ENCODE measurements at regions of chr3 and their contacts with region 1.

Region 1: GRCh38 chr3:167380004-167380689 is at the start of gene ZBBX:
- DNase-seq: peak; percentile 89
- ATAC-seq: peak; percentile 96
- H3K4me3 Mint-ChIP-seq: peak within 1 kb of the TSS; percentile 70
- H3K27ac Mint-ChIP-seq: no peak within 1 kb of the TSS
- H3K4me1 Mint-ChIP-seq: peaks cover 9% of the 10 kb centered on the region
- H3K27me3 Mint-ChIP-seq: peaks cover 21% of the 10 kb centered on the region
- CTCF ChIP-seq: peak; percentile 85
- total RNA-seq, gene ZBBX: not detected

Region 2: GRCh38 chr3:167241048-167241845 is 138.9 kb before region 1 on chr3:
- CTCF ChIA-PET with region 1: no interaction called
- POLR2A ChIA-PET with region 1: no interaction called
- intact Hi-C with region 1: no loop called
- DNase-seq: no peak
- ATAC-seq: no peak
- H3K4me3 Mint-ChIP-seq: no peak overlapping the region
- H3K27ac Mint-ChIP-seq: no peak overlapping the region
- H3K4me1 Mint-ChIP-seq: no peaks in the 10 kb centered on the region
- H3K27me3 Mint-ChIP-seq: no peaks in the 10 kb centered on the region
- CTCF ChIP-seq: no peak

Region 3: GRCh38 chr3:167354751-167355150 is 25.4 kb before region 1 on chr3:
- CTCF ChIA-PET with region 1: interaction called, 10 read pairs
- POLR2A ChIA-PET with region 1: no interaction called
- intact Hi-C with region 1: no loop called
- DNase-seq: no peak
- ATAC-seq: no peak
- H3K4me3 Mint-ChIP-seq: no peak overlapping the region
- H3K27ac Mint-ChIP-seq: no peak overlapping the region
- H3K4me1 Mint-ChIP-seq: no peaks in the 10 kb centered on the region
- H3K27me3 Mint-ChIP-seq: no peaks in the 10 kb centered on the region
- CTCF ChIP-seq: no peak

Region 4: DNA sequence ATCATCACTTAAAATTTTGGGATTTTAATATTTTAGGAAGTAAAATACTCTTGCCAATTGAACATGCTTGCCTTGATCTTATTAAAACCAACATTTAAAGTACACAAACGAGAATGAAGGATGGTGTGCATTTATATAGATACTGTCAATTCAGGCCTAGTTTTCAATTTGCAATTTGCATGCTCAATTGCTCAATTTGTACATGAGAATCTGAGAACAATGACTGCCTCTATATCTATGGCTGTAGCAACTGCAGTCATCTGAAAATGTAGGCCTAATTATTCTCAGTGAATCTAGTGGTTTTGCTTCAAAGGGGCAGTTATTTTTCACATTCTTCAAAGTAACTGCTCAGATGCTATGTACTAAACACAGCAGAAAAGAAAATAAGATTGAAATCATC is 18.8 kb before region 1 on chr3:
- CTCF ChIA-PET with region 1: interaction called, 22 read pairs
- POLR2A ChIA-PET with region 1: no interaction called
- intact Hi-C with region 1: no loop called
- DNase-seq: no peak
- ATAC-seq: no peak
- H3K4me3 Mint-ChIP-seq: no peak overlapping the region
- H3K27ac Mint-ChIP-seq: no peak overlapping the region
- H3K4me1 Mint-ChIP-seq: no peaks in the 10 kb centered on the region
- H3K27me3 Mint-ChIP-seq: no peaks in the 10 kb centered on the region
- CTCF ChIP-seq: no peak

Region 5: DNA sequence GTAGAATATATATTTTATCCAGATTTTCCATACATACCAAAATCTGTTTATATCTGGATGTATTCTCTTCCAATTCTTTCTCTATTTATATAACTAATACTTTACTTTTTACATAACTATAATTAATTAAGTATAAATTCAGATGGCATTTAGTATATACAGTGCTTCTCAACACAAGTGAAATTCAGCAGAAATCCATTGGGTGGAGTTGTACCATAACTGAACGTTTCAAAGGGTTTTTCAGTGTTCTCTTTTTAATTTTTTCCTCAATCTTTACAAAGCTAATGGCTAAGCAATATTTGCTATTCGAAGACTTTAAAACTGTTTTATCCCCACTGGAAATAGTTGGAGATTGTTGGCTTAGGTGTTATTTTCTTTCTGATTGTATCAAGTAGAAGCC is 13.9 kb after region 1 on chr3:
- CTCF ChIA-PET with region 1: interaction called, 29 read pairs
- POLR2A ChIA-PET with region 1: no interaction called
- intact Hi-C with region 1: no loop called
- DNase-seq: no peak
- ATAC-seq: no peak
- H3K4me3 Mint-ChIP-seq: no peak overlapping the region
- H3K27ac Mint-ChIP-seq: no peak overlapping the region
- H3K4me1 Mint-ChIP-seq: no peaks in the 10 kb centered on the region
- H3K27me3 Mint-ChIP-seq: peaks cover 8% of the 10 kb centered on the region
- CTCF ChIP-seq: no peak

Region 6: GRCh38 chr3:167467848-167468611 is 87.9 kb after region 1 on chr3:
- CTCF ChIA-PET with region 1: no interaction called
- POLR2A ChIA-PET with region 1: no interaction called
- intact Hi-C with region 1: no loop called
- DNase-seq: no peak
- ATAC-seq: no peak
- H3K4me3 Mint-ChIP-seq: no peak overlapping the region
- H3K27ac Mint-ChIP-seq: no peak overlapping the region
- H3K4me1 Mint-ChIP-seq: no peaks in the 10 kb centered on the region
- H3K27me3 Mint-ChIP-seq: no peaks in the 10 kb centered on the region
- CTCF ChIP-seq: no peak

Region 7: GRCh38 chr3:167684388-167684993 is 304.3 kb after region 1 on chr3:
- CTCF ChIA-PET with region 1: interaction called, 17 read pairs
- POLR2A ChIA-PET with region 1: no interaction called
- intact Hi-C with region 1: loop called (anchors 5 kb)
- DNase-seq: peak; percentile 61
- ATAC-seq: peak; percentile 74
- H3K4me3 Mint-ChIP-seq: no peak overlapping the region
- H3K27ac Mint-ChIP-seq: no peak overlapping the region
- H3K4me1 Mint-ChIP-seq: peaks cover 5% of the 10 kb centered on the region
- H3K27me3 Mint-ChIP-seq: no peaks in the 10 kb centered on the region
- CTCF ChIP-seq: peak; percentile 83

Region 8: DNA sequence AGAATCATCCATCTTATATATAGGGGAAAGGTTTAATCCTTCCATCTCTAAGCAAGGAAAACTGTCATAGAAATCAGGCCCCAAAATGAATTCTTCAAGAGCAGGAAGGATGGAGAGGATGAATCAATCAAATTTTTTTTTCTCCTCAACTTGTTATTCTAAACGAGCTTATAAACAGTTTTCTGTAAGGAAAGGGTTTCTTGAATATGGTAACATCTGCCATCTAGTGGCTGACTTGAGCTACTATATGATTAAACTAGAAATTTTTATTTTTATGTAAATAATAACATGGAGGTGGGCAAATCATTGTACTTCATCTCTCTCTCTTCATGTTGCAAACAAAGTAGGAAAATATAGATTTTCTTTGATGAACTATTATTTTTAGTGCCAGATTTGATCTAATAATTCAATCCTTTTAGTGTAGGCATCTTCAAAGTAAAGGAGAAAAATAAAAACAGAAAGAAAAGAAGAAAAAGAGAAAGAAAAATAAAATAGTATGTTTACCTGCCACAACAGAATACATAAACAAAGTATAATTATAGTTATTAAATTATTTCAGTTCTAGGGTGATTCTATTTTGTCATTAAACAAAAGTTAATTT is 502.0 kb after region 1 on chr3:
- CTCF ChIA-PET with region 1: interaction called, 25 read pairs
- POLR2A ChIA-PET with region 1: no interaction called
- intact Hi-C with region 1: loop called (anchors 5 kb)
- DNase-seq: no peak
- ATAC-seq: peak; percentile 55
- H3K4me3 Mint-ChIP-seq: no peak overlapping the region
- H3K27ac Mint-ChIP-seq: no peak overlapping the region
- H3K4me1 Mint-ChIP-seq: peaks cover 4% of the 10 kb centered on the region
- H3K27me3 Mint-ChIP-seq: peaks cover 14% of the 10 kb centered on the region
- CTCF ChIP-seq: peak; percentile 78